ENCODE measurements at regions of chr9 and their contacts with region 1.

Region 1: GRCh38 chr9:69834591-69835184 is 14.1 kb downstream of the CFAP95 start:
- DNase-seq: peak; percentile 57
- H3K4me3 Mint-ChIP-seq: peak overlapping the region; percentile 34
- H3K27ac Mint-ChIP-seq: peak overlapping the region; percentile 69
- H3K4me1 Mint-ChIP-seq: peaks cover 37% of the 10 kb centered on the region
- H3K27me3 Mint-ChIP-seq: no peaks in the 10 kb centered on the region

Region 2: DNA sequence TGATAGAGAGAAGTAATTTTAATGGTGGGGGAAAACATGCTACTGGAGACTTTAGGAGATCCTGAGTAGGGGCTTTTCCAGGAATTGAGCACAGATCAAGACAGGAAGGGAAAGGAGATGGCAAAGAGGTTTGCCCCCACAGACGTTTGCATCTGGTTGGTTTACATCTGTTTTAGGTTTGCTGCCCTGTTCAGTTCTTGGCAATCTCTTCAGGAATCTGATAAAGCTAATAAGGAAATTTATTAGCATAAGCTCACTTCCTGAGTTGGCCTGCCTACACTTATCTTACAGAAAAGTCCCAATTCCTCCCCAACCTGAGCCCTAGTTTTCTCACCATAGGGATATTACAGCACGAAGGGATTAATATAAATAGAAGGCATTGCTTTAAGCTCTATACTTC is 17.5 kb before region 1 on chr9:
- intact Hi-C with region 1: loop called (anchors 1 kb)
- DNase-seq: no peak
- H3K4me3 Mint-ChIP-seq: no peak overlapping the region
- H3K27ac Mint-ChIP-seq: no peak overlapping the region
- H3K4me1 Mint-ChIP-seq: peaks cover 45% of the 10 kb centered on the region
- H3K27me3 Mint-ChIP-seq: peaks cover 25% of the 10 kb centered on the region

Region 3: DNA sequence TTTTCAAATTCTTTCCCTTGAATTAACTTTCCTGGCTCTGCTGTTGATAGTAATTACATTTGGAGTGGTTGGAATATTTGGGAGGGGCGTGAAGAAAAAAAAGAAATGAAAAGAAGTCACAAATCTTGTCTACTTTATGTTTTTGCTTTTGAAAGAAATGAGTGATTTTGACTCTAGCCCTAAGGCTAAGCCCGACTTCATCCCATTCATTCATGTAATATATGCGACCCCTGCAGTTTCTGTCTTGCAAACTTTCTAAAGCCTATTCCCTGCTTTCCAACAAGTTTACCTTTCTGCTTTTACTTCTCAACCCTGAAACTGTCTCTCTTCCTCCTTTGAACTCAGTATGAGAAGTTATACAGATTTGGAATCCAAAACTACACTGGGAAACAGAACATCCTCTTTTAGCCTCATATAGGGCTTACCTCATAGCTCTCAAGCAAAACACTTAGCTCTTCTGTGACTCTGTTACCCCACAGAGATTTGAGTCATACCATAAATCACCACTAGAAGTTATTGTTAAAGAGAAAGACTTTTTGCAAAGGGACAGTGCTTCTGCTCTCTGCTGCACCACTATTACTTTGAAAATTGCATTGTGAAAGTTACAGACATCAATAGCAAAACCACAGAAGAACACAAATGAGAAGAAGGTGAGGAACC is 12.5 kb before region 1 on chr9:
- intact Hi-C with region 1: loop called (anchors 1 kb)
- DNase-seq: peak; percentile 54
- H3K4me3 Mint-ChIP-seq: no peak overlapping the region
- H3K27ac Mint-ChIP-seq: no peak overlapping the region
- H3K4me1 Mint-ChIP-seq: peaks cover 40% of the 10 kb centered on the region
- H3K27me3 Mint-ChIP-seq: peaks cover 17% of the 10 kb centered on the region

Region 4: DNA sequence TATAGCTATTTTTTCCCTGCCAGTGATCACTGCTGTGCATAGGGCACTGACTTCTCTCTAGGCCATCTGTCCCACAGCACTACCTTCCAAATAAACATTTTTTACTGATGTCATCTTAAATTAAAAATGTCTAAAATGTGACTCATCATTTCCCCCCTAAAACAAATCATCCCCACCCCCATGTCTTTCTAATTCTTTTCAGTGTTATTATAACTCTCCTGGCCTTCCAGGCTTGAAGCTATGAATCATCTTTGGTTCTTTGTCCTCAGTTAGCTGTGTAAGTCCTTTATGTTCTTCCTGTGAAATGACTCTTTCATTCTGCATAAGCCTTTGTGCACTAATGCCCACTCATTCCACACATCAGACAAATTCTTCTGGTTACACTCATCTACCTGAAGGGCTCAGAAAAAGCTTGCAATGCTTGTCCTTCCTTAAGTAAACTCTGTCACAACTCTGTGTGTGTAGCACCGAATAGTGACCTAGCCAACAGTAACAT is 64.1 kb after region 1 on chr9:
- intact Hi-C with region 1: loop called (anchors 5 kb)
- DNase-seq: no peak
- H3K4me3 Mint-ChIP-seq: no peak overlapping the region
- H3K27ac Mint-ChIP-seq: peak overlapping the region; percentile 21
- H3K4me1 Mint-ChIP-seq: peaks cover 8% of the 10 kb centered on the region
- H3K27me3 Mint-ChIP-seq: no peaks in the 10 kb centered on the region